Naive thymus-derived CD4-positive, alpha-beta T cell (primary cell): ENCODE measurements at regions of chr5 and their contacts with region 1.

Region 1: GRCh38 chr5:90434116-90434714 is 24.7 kb upstream of the CETN3 start:
- DNase-seq: peak in 7 of 9 donors; percentile 11 to 45 (median 41)
- ATAC-seq: peak; percentile 69
- H3K4me3 ChIP-seq: no peak overlapping the region
- H3K4me3 Mint-ChIP-seq: no peak overlapping the region
- H3K27ac ChIP-seq: no peak overlapping the region
- H3K27ac Mint-ChIP-seq: no peak overlapping the region
- H3K4me1 ChIP-seq: no peaks in the 10 kb centered on the region
- H3K4me1 Mint-ChIP-seq: no peaks in the 10 kb centered on the region
- H3K27me3 ChIP-seq: no peaks in the 10 kb centered on the region
- H3K27me3 Mint-ChIP-seq: peaks cover 0 to 40% (median 5%) of the 10 kb centered on the region in 5 donors

Region 2: GRCh38 chr5:88729084-88729828 is 1705.0 kb before region 1 on chr5:
- CTCF ChIA-PET with region 1: interaction called, 19 read pairs
- POLR2A ChIA-PET with region 1: no interaction called
- intact Hi-C with region 1: loop called in 1 of 2 experiments (anchors 1 kb)
- DNase-seq: peak in 8 of 9 donors; percentile 28 to 64 (median 50)
- ATAC-seq: peak; percentile 81
- H3K4me3 ChIP-seq: no peak overlapping the region
- H3K4me3 Mint-ChIP-seq: no peak overlapping the region
- H3K27ac ChIP-seq: no peak overlapping the region
- H3K27ac Mint-ChIP-seq: no peak overlapping the region
- H3K4me1 ChIP-seq: no peaks in the 10 kb centered on the region
- H3K4me1 Mint-ChIP-seq: peaks cover 3 to 8% (median 4%) of the 10 kb centered on the region in 7 donors
- H3K27me3 ChIP-seq: no peaks in the 10 kb centered on the region
- H3K27me3 Mint-ChIP-seq: peaks cover 8 to 18% (median 17%) of the 10 kb centered on the region in 5 donors

Region 3: DNA sequence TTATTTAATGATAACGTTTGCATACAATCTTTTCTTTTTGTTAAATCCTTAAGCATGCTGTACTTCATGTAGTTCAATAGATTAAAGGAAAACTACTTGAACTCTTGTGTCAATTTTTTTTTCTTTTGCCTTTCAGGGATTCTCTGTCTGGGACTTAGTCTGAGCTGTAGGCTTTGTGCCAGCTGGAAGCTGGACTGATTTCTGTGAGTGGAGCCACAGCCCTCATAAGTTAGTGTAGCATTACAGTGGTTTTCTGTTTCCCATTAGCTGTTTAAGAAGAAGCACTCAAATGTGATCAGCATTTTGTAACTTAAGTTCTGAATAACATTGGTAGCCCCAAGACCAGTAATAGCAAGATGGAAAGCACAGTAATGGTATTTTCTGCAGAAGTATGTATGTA is 1220.6 kb before region 1 on chr5:
- CTCF ChIA-PET with region 1: no interaction called
- POLR2A ChIA-PET with region 1: no interaction called
- intact Hi-C with region 1: no loop called
- DNase-seq: no peak
- ATAC-seq: no peak
- H3K4me3 ChIP-seq: no peak overlapping the region
- H3K4me3 Mint-ChIP-seq: no peak overlapping the region
- H3K27ac ChIP-seq: no peak overlapping the region
- H3K27ac Mint-ChIP-seq: no peak overlapping the region
- H3K4me1 ChIP-seq: no peaks in the 10 kb centered on the region
- H3K4me1 Mint-ChIP-seq: no peaks in the 10 kb centered on the region
- H3K27me3 ChIP-seq: no peaks in the 10 kb centered on the region
- H3K27me3 Mint-ChIP-seq: no peaks in the 10 kb centered on the region

Region 4: GRCh38 chr5:90409318-90410177 is 24.7 kb before region 1 on chr5 and contains the start of gene CETN3:
- CTCF ChIA-PET with region 1: interaction called, 5 read pairs
- POLR2A ChIA-PET with region 1: interaction called, 7 read pairs
- intact Hi-C with region 1: loop called (anchors 1 kb)
- DNase-seq: peak; percentile 72 to 93 (median 88)
- ATAC-seq: peak; percentile 94
- H3K4me3 ChIP-seq: peak within 1 kb of the TSS; percentile 100
- H3K4me3 Mint-ChIP-seq: no peak within 1 kb of the TSS
- H3K27ac ChIP-seq: peak within 1 kb of the TSS; percentile 93
- H3K27ac Mint-ChIP-seq: no peak within 1 kb of the TSS
- H3K4me1 ChIP-seq: peaks cover 7 to 13% of the 10 kb centered on the region in 2 donors
- H3K4me1 Mint-ChIP-seq: peaks cover 12 to 26% (median 16%) of the 10 kb centered on the region in 7 donors
- H3K27me3 ChIP-seq: no peaks in the 10 kb centered on the region
- H3K27me3 Mint-ChIP-seq: peaks cover 0 to 4% (median 0%) of the 10 kb centered on the region in 5 donors
- total RNA-seq, gene CETN3: 4.4 to 31.0 (median 22.1) TPM

Region 5: DNA sequence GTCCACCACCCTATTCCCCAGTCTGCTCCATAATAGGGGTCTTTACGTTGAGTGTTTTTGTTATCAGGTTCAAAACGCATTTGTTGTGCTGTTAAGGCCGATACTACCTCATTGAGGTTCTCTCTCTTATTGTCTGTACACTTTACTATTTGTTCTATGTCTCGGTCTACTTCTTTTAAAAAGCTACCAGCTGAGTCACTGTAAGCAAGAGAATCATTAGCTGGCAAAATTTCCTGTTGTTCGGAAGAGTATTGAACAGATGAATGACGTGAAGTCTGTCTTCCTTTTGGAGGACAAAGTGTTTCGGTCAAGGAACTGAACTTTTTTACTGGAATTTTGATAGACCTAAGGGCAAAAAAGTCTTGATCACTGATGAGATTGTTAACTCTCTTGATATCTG is 84.9 kb after region 1 on chr5:
- CTCF ChIA-PET with region 1: no interaction called
- POLR2A ChIA-PET with region 1: no interaction called
- intact Hi-C with region 1: no loop called
- DNase-seq: no peak
- ATAC-seq: no peak
- H3K4me3 ChIP-seq: no peak overlapping the region
- H3K4me3 Mint-ChIP-seq: no peak overlapping the region
- H3K27ac ChIP-seq: no peak overlapping the region
- H3K27ac Mint-ChIP-seq: no peak overlapping the region
- H3K4me1 ChIP-seq: no peaks in the 10 kb centered on the region
- H3K4me1 Mint-ChIP-seq: peaks cover 0 to 27% (median 22%) of the 10 kb centered on the region in 7 donors
- H3K27me3 ChIP-seq: no peaks in the 10 kb centered on the region
- H3K27me3 Mint-ChIP-seq: no peaks in the 10 kb centered on the region

Region 6: GRCh38 chr5:90606539-90606938 is 172.3 kb after region 1 on chr5:
- CTCF ChIA-PET with region 1: interaction called, 8 read pairs
- POLR2A ChIA-PET with region 1: no interaction called
- intact Hi-C with region 1: loop called in 1 of 2 experiments (anchors 2 kb)
- DNase-seq: no peak
- ATAC-seq: no peak
- H3K4me3 ChIP-seq: no peak overlapping the region
- H3K4me3 Mint-ChIP-seq: no peak overlapping the region
- H3K27ac ChIP-seq: no peak overlapping the region
- H3K27ac Mint-ChIP-seq: no peak overlapping the region
- H3K4me1 ChIP-seq: no peaks in the 10 kb centered on the region
- H3K4me1 Mint-ChIP-seq: no peaks in the 10 kb centered on the region
- H3K27me3 ChIP-seq: no peaks in the 10 kb centered on the region
- H3K27me3 Mint-ChIP-seq: peaks cover 3 to 56% (median 43%) of the 10 kb centered on the region in 5 donors

Region 7: DNA sequence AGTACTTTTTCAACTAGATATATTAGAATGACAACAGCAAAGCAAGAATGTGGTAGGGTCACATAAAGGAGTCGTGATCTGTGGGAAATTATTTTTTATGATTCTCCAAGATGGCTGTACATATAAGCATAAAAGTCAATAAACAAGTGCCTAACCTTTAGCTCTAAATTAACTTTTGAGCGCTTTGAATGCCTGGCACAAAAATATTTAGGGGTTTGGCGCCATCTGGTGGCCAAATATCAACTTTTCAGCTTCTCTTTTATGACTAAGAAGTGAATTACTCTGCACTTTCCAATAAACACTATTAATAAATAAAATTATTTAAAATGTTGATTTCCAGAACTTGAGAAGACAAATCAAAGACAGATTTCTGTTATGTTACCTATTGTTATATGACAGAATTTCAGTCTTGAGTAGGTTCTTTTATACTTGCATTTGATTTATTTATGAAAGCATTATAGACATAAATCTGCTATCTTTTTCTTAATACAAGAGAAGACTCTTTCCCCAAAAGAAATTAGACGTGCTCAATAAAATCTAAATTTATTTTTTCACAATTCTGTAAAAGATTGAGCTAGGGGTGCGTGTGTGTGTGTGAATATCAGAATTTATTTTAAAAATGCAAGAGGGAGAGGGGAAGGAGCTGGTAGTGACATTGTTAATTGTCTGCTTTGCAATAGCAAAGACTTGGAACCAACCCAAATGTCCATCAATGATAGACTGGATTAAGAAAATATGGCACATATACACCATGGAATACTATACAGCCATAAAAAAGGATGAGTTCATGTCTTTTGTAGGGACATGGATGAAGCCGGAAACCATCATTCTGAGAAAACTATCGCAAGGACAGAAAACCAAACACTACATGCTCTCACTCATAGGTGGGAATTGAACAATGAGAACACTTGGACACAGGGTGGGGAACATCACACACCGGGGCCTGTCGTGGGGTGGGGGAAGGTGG is 985.6 kb after region 1 on chr5:
- CTCF ChIA-PET with region 1: no interaction called
- POLR2A ChIA-PET with region 1: no interaction called
- intact Hi-C with region 1: loop called in 1 of 2 experiments (anchors 1 kb)
- DNase-seq: peak; percentile 40 to 72 (median 58)
- ATAC-seq: peak; percentile 60
- H3K4me3 ChIP-seq: no peak overlapping the region
- H3K4me3 Mint-ChIP-seq: peak overlapping the region in 1 of 10 donors; percentile 15
- H3K27ac ChIP-seq: no peak overlapping the region
- H3K27ac Mint-ChIP-seq: no peak overlapping the region
- H3K4me1 ChIP-seq: no peaks in the 10 kb centered on the region
- H3K4me1 Mint-ChIP-seq: peaks cover 0 to 30% (median 20%) of the 10 kb centered on the region in 7 donors
- H3K27me3 ChIP-seq: no peaks in the 10 kb centered on the region
- H3K27me3 Mint-ChIP-seq: peaks cover 0 to 5% (median 0%) of the 10 kb centered on the region in 5 donors